GM10248 (cell line): ENCODE measurements at regions of chr3 and their contacts with region 1.

Region 1: GRCh38 chr3:32467333-32468070 is 35.1 kb downstream of the CMTM6 start:
- DNase-seq: peak; percentile 85
- CTCF ChIP-seq: peak; percentile 99

Region 2: GRCh38 chr3:32366638-32367397 is 100.7 kb before region 1 on chr3:
- CTCF ChIA-PET with region 1: interaction called, 22 read pairs
- POLR2A ChIA-PET with region 1: no interaction called
- DNase-seq: peak; percentile 31
- CTCF ChIP-seq: no peak

Region 3: GRCh38 chr3:32406486-32407408 is 60.8 kb before region 1 on chr3:
- CTCF ChIA-PET with region 1: interaction called, 10 read pairs
- POLR2A ChIA-PET with region 1: no interaction called
- DNase-seq: no peak
- CTCF ChIP-seq: no peak

Region 4: GRCh38 chr3:32432711-32433530 is 34.6 kb before region 1 on chr3:
- CTCF ChIA-PET with region 1: interaction called, 76 read pairs
- POLR2A ChIA-PET with region 1: no interaction called
- DNase-seq: peak; percentile 52
- CTCF ChIP-seq: no peak

Region 5: GRCh38 chr3:32484436-32484835 is 16.9 kb after region 1 on chr3:
- CTCF ChIA-PET with region 1: interaction called, 62 read pairs
- POLR2A ChIA-PET with region 1: no interaction called
- DNase-seq: no peak
- CTCF ChIP-seq: no peak

Region 6: GRCh38 chr3:33006081-33006480 is 538.6 kb after region 1 on chr3:
- CTCF ChIA-PET with region 1: no interaction called
- POLR2A ChIA-PET with region 1: no interaction called
- DNase-seq: no peak
- CTCF ChIP-seq: no peak